ENCODE measurements at regions of chr19 and their contacts with region 1.

Region 1: GRCh38 chr19:5018224-5019015 is 49.5 kb downstream of the KDM4B start:
- DNase-seq: no peak

Region 2: GRCh38 chr19:4976401-4977298 is 41.8 kb before region 1 on chr19:
- intact Hi-C with region 1: loop called in 1 of 2 experiments (anchors 5 kb)
- DNase-seq: peak; percentile 94